Activated CD4-positive, alpha-beta T cell treated with anti-CD3 and anti-CD28 coated beads for 36 hours (primary cell): ENCODE measurements at regions of chr10 and their contacts with region 1.

Region 1: GRCh38 chr10:110746254-110746826 is 102.2 kb downstream of the RBM20 start:
- DNase-seq: peak; percentile 66
- ATAC-seq: peak; percentile 25
- H3K4me3 Mint-ChIP-seq: no peak overlapping the region
- H3K27ac Mint-ChIP-seq: no peak overlapping the region
- H3K4me1 Mint-ChIP-seq: peaks cover 76% of the 10 kb centered on the region
- H3K27me3 Mint-ChIP-seq: no peaks in the 10 kb centered on the region

Region 2: DNA sequence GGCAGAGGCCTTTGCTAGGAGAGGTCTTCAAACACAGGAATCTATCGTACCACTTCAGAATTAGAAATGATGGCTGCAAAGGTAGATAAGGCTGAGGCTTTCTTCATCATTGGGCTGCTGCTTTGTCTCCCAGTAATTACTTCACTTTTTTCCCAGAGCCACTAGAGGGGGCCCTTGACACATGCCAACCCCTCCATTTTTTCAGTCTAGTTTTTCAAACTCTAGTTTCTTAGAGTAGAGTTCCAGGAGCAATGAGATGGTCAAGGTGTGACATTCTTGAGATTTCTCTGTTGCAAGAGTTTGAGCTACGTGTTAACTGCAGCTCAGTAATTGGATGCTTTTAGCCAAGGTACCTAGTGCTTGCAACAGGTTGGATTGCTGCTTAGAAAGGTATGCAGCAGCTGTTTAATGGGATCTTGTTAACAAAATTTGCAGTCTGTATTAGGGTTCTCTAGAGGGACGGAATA is 136.0 kb before region 1 on chr10:
- CTCF ChIA-PET with region 1: interaction called, 5 read pairs
- POLR2A ChIA-PET with region 1: no interaction called
- intact Hi-C with region 1: loop called in 1 of 2 experiments (anchors 2 kb)
- DNase-seq: peak; percentile 72
- ATAC-seq: peak; percentile 16
- H3K4me3 Mint-ChIP-seq: no peak overlapping the region
- H3K27ac Mint-ChIP-seq: no peak overlapping the region
- H3K4me1 Mint-ChIP-seq: peaks cover 38% of the 10 kb centered on the region
- H3K27me3 Mint-ChIP-seq: no peaks in the 10 kb centered on the region

Region 3: GRCh38 chr10:110641256-110641655 is 105.1 kb before region 1 on chr10:
- CTCF ChIA-PET with region 1: no interaction called
- POLR2A ChIA-PET with region 1: no interaction called
- intact Hi-C with region 1: no loop called
- DNase-seq: peak; percentile 76
- ATAC-seq: peak; percentile 92
- H3K4me3 Mint-ChIP-seq: no peak overlapping the region
- H3K27ac Mint-ChIP-seq: no peak overlapping the region
- H3K4me1 Mint-ChIP-seq: peaks cover 29% of the 10 kb centered on the region
- H3K27me3 Mint-ChIP-seq: peaks cover 38% of the 10 kb centered on the region

Region 4: DNA sequence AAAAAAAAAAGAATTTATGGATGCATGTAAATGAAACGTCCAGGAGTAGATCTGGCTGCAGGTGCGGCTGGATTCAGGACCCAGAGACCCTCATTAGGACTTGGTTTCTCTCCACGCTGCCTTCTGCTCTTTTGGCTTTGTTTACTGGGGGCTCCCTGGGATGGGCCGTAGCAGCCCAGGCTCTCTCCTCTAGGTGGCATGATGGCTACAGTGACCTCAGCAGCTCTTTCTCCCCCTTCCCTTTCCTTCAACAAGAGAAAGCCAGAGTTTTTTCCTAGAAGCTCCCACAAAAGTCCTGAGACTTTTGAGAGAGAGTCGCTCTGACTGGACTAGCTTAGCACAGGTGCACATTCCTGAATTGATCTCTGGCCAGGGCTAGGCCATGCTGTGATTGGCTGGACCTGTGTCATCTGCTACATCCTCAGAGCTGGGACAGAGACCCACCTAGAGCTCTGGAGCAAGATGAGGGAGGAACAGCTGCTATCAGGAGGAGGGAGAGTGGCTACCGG is 57.5 kb after region 1 on chr10:
- CTCF ChIA-PET with region 1: interaction called, 5 read pairs
- POLR2A ChIA-PET with region 1: no interaction called
- intact Hi-C with region 1: loop called in 1 of 2 experiments (anchors 5 kb)
- DNase-seq: peak; percentile 52
- ATAC-seq: peak; percentile 72
- H3K4me3 Mint-ChIP-seq: no peak overlapping the region
- H3K27ac Mint-ChIP-seq: peak overlapping the region; percentile 6
- H3K4me1 Mint-ChIP-seq: peaks cover 30% of the 10 kb centered on the region
- H3K27me3 Mint-ChIP-seq: no peaks in the 10 kb centered on the region

Region 5: GRCh38 chr10:110893559-110894179 is 147.3 kb after region 1 on chr10:
- CTCF ChIA-PET with region 1: interaction called, 22 read pairs
- POLR2A ChIA-PET with region 1: no interaction called
- intact Hi-C with region 1: loop called (anchors 1 kb)
- DNase-seq: no peak
- ATAC-seq: peak; percentile 87
- H3K4me3 Mint-ChIP-seq: no peak overlapping the region
- H3K27ac Mint-ChIP-seq: no peak overlapping the region
- H3K4me1 Mint-ChIP-seq: peaks cover 33% of the 10 kb centered on the region
- H3K27me3 Mint-ChIP-seq: no peaks in the 10 kb centered on the region

Region 6: DNA sequence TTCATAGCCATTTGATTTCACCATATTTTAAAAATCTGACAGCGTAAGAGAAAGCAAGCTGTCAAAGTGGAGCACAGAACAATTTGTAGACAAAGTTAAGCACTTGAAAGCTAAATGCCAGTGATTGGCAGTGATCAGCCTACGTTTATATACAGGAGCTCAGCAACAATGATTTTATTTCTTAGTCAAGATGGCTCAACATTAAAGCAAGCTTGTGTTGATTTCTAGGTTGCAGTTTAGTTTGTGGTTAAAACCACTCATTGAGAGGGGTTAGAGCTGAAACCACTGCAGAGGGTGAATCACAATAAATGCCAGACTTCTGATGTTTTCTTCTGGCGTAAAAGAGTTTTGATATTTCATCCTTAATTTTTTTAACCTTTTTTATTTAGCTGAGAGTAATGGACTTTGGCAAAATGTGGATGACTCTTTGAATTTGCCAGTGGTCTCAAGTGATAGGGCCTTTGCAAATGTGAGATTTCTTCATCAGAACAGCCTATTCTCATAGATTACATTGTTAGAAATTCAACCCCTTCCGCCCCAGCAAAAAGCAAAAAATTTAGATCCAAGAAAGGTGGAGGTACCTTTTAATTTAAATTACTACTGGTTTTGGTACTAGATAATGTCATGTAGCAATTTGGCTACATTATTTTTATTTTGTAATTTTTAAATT is 246.8 kb after region 1 on chr10:
- CTCF ChIA-PET with region 1: interaction called, 3 read pairs
- POLR2A ChIA-PET with region 1: no interaction called
- intact Hi-C with region 1: loop called (anchors 5 to 10 kb)
- DNase-seq: peak; percentile 24
- ATAC-seq: peak; percentile 97
- H3K4me3 Mint-ChIP-seq: peak overlapping the region; percentile 47
- H3K27ac Mint-ChIP-seq: peak overlapping the region; percentile 13
- H3K4me1 Mint-ChIP-seq: peaks cover 45% of the 10 kb centered on the region
- H3K27me3 Mint-ChIP-seq: no peaks in the 10 kb centered on the region

Region 7: GRCh38 chr10:111037864-111038263 is 291.5 kb after region 1 on chr10:
- CTCF ChIA-PET with region 1: no interaction called
- POLR2A ChIA-PET with region 1: no interaction called
- intact Hi-C with region 1: no loop called
- DNase-seq: no peak
- ATAC-seq: no peak
- H3K4me3 Mint-ChIP-seq: no peak overlapping the region
- H3K27ac Mint-ChIP-seq: no peak overlapping the region
- H3K4me1 Mint-ChIP-seq: no peaks in the 10 kb centered on the region
- H3K27me3 Mint-ChIP-seq: peaks cover 2% of the 10 kb centered on the region

Region 8: GRCh38 chr10:111207500-111207899 is 461.2 kb after region 1 on chr10:
- CTCF ChIA-PET with region 1: interaction called, 3 read pairs
- POLR2A ChIA-PET with region 1: no interaction called
- intact Hi-C with region 1: loop called (anchors 1 kb)
- DNase-seq: peak; percentile 59
- ATAC-seq: no peak
- H3K4me3 Mint-ChIP-seq: no peak overlapping the region
- H3K27ac Mint-ChIP-seq: no peak overlapping the region
- H3K4me1 Mint-ChIP-seq: no peaks in the 10 kb centered on the region
- H3K27me3 Mint-ChIP-seq: peaks cover 4% of the 10 kb centered on the region

Region 9: DNA sequence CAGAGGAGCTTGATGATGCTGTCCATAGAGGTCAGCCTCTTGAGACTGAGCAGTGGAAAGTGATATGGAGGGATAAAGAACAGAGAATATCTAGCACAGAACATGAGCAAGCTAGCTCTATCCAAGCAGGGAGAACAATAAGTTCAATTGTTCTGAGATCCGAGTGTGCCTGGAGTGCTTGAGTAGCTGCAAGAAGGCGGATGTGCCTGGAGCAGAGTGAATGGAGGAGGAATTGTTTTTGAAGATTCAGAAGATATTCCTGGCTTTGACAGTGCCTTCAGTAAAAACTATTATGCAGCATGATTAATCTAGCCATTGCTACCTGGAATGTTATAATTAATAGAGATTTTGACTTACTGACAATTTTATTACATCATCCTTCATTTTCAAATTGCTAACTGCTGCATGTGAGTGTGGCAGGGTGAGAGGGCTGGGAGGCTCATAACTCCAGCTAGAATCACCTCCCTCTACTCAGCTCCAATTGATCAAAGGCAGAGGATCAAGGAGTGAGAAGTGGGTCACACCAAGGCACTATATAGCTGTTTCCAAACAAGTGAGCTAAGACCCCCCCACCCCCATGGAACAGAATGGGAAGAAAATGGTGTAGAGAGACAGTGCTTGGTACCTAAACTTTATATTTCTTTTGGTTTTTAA is 633.3 kb after region 1 on chr10:
- CTCF ChIA-PET with region 1: no interaction called
- POLR2A ChIA-PET with region 1: no interaction called
- intact Hi-C with region 1: no loop called
- DNase-seq: no peak
- ATAC-seq: no peak
- H3K4me3 Mint-ChIP-seq: no peak overlapping the region
- H3K27ac Mint-ChIP-seq: no peak overlapping the region
- H3K4me1 Mint-ChIP-seq: peaks cover 3% of the 10 kb centered on the region
- H3K27me3 Mint-ChIP-seq: peaks cover 18% of the 10 kb centered on the region

Region 10: DNA sequence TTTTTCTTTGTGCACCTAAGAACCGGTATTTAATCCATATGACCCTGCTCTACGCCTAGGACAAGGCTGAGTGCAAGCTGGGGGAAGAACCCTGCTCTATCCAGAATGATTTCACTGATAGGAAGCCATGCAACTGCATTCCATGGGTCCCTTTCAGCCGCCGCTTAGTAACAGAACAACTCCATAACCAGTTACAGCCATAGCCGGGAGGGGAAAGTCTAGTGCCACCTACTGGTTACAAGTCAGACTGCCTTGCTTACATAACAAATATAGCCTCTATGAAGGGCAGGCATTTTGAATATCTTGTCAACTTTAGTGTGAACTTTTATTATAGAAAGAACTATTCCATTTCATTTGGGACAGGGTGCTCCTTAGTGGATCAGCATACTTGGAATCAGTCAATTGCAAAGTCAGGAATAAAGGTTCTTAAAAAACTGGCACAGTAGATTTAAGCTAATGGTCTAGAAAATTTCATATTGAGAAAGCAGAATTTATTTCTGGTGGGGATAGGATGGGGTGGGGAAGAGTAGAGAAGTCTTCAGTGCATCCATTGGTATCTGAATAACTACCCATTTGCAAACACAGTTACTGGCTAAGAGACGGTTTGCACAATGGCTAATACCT is 852.2 kb after region 1 on chr10:
- CTCF ChIA-PET with region 1: no interaction called
- POLR2A ChIA-PET with region 1: no interaction called
- intact Hi-C with region 1: loop called in 1 of 2 experiments (anchors 5 kb)
- DNase-seq: peak; percentile 64
- ATAC-seq: peak; percentile 47
- H3K4me3 Mint-ChIP-seq: no peak overlapping the region
- H3K27ac Mint-ChIP-seq: no peak overlapping the region
- H3K4me1 Mint-ChIP-seq: no peaks in the 10 kb centered on the region
- H3K27me3 Mint-ChIP-seq: peaks cover 4% of the 10 kb centered on the region